T-cell (primary cell): ENCODE measurements at regions of chr9 and their contacts with region 1.

Region 1: DNA sequence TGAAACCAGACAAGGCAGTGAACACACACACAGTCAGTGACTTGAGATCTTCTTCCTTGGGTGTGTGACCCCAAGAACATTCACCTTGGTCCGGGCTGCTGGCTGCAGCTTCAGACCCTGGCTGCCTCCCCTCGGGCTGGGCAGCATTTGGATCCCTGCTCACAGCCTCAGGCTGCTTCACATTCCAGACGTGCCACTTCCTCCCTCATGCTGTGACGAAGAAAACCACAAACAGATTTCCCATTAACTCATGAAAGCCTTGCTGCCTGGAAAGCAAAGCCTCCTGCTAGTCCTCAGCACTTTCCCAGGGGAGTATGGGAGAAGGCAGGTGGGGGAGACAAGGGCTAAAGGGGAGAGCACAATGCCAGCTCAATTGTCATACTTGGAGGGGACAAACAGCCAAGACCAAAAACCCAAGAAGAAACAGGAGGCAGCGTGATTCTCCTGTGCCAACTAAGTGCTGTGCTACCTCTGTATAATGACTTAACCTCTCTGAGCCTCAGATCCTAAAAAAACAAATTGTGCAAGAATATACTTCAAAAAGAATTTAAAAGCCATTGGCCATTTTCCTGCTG is 594.6 kb upstream of the BRINP1 start:
- DNase-seq: no peak
- ATAC-seq: no peak
- H3K4me3 ChIP-seq: no peak overlapping the region
- H3K4me3 Mint-ChIP-seq: no peak overlapping the region
- H3K27ac ChIP-seq: no peak overlapping the region
- H3K27ac Mint-ChIP-seq: no peak overlapping the region
- H3K4me1 ChIP-seq: no peaks in the 10 kb centered on the region
- H3K4me1 Mint-ChIP-seq: no peaks in the 10 kb centered on the region
- H3K27me3 ChIP-seq: peaks cover 0 to 9% of the 10 kb centered on the region in 2 experiments
- H3K27me3 Mint-ChIP-seq: peaks cover 7 to 17% of the 10 kb centered on the region in 2 donors

Region 2: GRCh38 chr9:118091711-118092500 is 1872.0 kb before region 1 on chr9:
- CTCF ChIA-PET with region 1: interaction called in 1 of 2 experiments, 11 read pairs
- POLR2A ChIA-PET with region 1: no interaction called
- DNase-seq: no peak
- ATAC-seq: no peak
- H3K4me3 ChIP-seq: no peak overlapping the region
- H3K4me3 Mint-ChIP-seq: no peak overlapping the region
- H3K27ac ChIP-seq: no peak overlapping the region
- H3K27ac Mint-ChIP-seq: no peak overlapping the region
- H3K4me1 ChIP-seq: no peaks in the 10 kb centered on the region
- H3K4me1 Mint-ChIP-seq: no peaks in the 10 kb centered on the region
- H3K27me3 ChIP-seq: no peaks in the 10 kb centered on the region
- H3K27me3 Mint-ChIP-seq: no peaks in the 10 kb centered on the region

Region 3: DNA sequence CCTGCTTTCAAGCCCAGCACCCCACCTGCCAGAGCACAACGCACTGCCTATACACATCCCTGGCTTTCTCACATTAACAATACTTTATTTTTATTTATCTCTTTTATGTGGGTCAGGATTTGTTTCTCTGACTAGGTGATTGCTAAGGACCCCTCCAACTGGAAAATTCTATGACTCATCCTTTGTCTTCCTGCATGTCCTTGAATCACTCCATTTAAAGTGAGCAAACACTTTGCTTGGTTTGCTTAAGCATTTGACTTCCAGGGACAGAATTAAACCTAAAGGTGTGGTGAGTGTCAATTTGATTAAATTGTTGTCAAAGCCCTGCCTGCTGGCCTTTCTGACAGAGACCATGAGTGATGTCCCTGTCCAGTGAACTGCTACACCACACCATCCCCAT is 58.2 kb before region 1 on chr9:
- CTCF ChIA-PET with region 1: no interaction called
- POLR2A ChIA-PET with region 1: no interaction called
- DNase-seq: no peak
- ATAC-seq: no peak
- H3K4me3 ChIP-seq: no peak overlapping the region
- H3K4me3 Mint-ChIP-seq: no peak overlapping the region
- H3K27ac ChIP-seq: no peak overlapping the region
- H3K27ac Mint-ChIP-seq: no peak overlapping the region
- H3K4me1 ChIP-seq: no peaks in the 10 kb centered on the region
- H3K4me1 Mint-ChIP-seq: no peaks in the 10 kb centered on the region
- H3K27me3 ChIP-seq: no peaks in the 10 kb centered on the region
- H3K27me3 Mint-ChIP-seq: peaks cover 0 to 9% of the 10 kb centered on the region in 2 donors